ENCODE measurements at regions of chr22 and their contacts with region 1.

Region 1: GRCh38 chr22:23675492-23676415 is 15.1 kb upstream of the RGL4 start:
- DNase-seq: peak; percentile 72
- H3K4me3 ChIP-seq: no peak overlapping the region
- H3K27ac ChIP-seq: no peak overlapping the region
- H3K4me1 ChIP-seq: peaks cover 4% of the 10 kb centered on the region
- H3K27me3 ChIP-seq: no peaks in the 10 kb centered on the region
- CTCF ChIP-seq: no peak

Region 2: GRCh38 chr22:24601217-24602104 is 925.7 kb after region 1 on chr22:
- intact Hi-C with region 1: loop called (anchors 5 kb)
- DNase-seq: peak; percentile 88
- H3K4me3 ChIP-seq: no peak overlapping the region
- H3K27ac ChIP-seq: peak overlapping the region; percentile 65
- H3K4me1 ChIP-seq: peaks cover 11% of the 10 kb centered on the region
- H3K27me3 ChIP-seq: no peaks in the 10 kb centered on the region
- CTCF ChIP-seq: no peak